ENCODE measurements at regions of chr1 and their contacts with region 1.

Region 1: GRCh38 chr1:176843352-176844297 is 320.9 kb downstream of the ASTN1 start:
- DNase-seq: no peak

Region 2: DNA sequence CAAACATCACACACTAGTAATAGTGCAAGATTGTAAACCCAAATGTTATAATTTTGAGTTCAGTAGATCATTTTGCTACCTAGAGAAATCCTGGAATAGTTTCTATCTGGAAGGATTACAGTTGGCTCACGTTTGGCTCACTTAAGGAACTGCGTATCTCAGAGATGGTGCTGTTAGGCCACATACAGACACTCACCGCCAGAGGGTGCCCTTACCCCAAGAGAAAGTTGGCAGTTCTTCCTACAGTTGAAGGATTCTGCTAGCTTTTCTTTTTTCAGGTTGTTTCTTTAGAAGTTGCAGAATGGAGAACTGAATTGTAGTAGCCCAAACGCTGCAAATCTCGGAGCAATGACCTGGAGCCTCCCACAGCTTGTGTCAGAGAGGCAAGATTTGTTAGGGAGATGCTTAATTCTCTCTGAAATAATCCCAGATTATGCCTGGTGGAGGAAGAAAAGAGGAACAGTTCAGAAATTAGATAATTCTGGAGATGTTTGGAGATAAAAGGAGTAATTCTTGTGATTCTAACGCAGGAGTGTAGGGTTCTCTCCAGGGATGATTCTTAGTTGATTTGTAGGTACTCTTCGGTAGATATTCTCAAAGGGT is 468.6 kb before region 1 on chr1:
- intact Hi-C with region 1: loop called (anchors 5 kb)
- DNase-seq: peak; percentile 77

Region 3: GRCh38 chr1:176656257-176656995 is 187.2 kb before region 1 on chr1:
- intact Hi-C with region 1: loop called (anchors 10 kb)
- DNase-seq: no peak

Region 4: DNA sequence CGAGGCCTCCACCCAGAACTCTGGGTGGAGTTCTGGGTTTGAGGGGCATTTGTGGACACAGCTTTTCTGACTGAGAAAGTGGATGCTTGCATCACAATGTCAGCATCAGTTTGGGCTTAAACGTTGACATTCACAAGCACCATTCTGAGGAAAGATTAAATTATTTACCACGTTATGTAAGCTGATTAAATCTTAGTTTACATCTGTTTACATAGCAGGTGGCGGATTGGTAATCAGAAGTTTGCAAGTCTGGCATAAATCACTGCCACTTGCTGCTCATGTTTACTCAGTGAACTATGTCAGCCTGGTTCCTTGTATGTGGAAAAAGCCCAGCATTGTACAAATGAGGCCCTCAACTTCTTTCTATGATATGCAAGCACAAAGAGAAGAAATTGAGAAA is 70.6 kb before region 1 on chr1:
- intact Hi-C with region 1: no loop called
- DNase-seq: no peak

Region 5: DNA sequence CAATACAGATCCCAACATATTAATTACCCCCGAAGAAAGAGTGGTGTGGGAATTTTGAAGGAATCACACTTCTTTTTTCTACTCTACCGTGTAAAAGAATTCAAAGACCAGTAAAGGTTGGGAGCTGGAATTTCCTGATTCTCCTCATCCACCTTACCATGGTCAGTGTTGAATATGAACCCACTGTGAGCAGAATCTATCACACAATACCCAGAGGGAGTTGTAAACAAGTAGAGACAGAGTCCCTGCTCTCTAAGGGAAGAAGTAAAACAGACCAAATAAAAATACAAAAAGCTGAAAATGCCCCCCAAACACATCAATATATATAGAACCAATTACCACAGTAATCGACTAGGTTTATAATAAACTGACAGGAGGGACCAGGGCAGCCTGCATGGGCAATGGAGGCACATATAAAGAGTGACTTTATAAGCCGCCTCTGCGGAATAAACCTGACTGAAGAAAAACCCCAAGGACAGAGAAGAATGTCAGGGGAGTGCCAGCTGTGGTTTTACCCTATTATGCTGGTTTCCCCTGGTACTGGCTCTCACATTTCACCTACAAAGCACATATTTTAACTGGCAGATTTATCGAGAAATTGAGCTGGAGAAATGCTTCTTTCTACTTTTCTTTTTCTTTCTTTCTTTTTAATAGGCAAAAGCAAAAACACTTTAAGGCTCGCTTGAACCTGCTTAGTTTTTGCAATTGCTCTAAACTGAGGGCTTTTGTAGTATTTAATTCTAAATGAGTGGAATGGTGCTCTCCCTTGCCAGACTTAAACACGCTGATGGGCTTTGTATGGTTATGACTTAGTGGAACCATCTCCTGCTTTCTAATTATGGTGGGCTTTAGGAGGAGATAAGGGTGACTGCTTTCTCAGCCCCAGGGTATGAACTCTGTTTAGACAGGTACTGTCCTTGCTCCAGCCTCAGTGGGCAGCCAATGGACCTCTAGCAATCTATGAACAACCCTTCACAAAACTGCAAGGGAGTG is 76.1 kb after region 1 on chr1:
- intact Hi-C with region 1: no loop called
- DNase-seq: no peak

Measured in cardiac septum (tissue), 1 donor.